Right ventricle myocardium inferior (tissue), 1 donor: ENCODE measurements at regions of chr18 and their contacts with region 1.

Region 1: GRCh38 chr18:70431203-70431624 is 142.4 kb downstream of the SOCS6 start:
- DNase-seq: no peak
- ATAC-seq: no peak

Region 2: GRCh38 chr18:70195852-70196434 is 235.3 kb before region 1 on chr18:
- intact Hi-C with region 1: loop called (anchors 2 kb)
- DNase-seq: no peak
- ATAC-seq: peak; percentile 64

Region 3: GRCh38 chr18:70205421-70206397 is 225.5 kb before region 1 on chr18 and contains the start of gene RTTN:
- intact Hi-C with region 1: loop called (anchors 2 kb)
- DNase-seq: peak; percentile 97
- ATAC-seq: peak; percentile 100
- total RNA-seq, gene RTTN: 9.4 TPM

Region 4: DNA sequence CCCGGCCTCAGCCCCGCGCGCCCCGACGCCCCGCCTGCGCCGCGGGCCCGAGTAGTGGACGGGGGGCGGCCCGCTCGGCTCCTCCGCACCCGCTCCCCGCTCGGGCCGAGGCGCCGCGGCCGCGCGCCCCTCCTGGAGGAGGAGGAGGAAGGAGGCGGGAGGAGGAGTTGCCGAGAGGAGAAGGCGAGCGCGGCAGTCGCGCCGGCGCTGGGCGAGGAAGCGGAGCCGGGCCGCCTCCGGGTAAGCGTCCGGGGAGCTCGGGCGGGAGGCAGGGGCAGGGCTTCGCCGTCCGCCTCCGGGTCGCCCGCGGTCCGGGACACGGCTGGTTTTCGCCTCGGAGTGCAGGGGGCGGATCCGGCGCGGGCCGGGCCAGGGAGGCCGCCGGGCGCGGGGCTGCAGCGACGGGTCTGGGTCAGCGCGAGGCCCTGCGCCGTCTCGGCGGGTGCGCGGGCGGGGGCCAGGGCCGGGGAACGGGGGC is 142.3 kb before region 1 on chr18 and contains the start of gene SOCS6:
- intact Hi-C with region 1: loop called (anchors 2 kb)
- DNase-seq: peak; percentile 82
- ATAC-seq: peak; percentile 70
- total RNA-seq, gene SOCS6: 21.8 TPM